ENCODE measurements at regions of chr12 and their contacts with region 1.

Region 1: DNA sequence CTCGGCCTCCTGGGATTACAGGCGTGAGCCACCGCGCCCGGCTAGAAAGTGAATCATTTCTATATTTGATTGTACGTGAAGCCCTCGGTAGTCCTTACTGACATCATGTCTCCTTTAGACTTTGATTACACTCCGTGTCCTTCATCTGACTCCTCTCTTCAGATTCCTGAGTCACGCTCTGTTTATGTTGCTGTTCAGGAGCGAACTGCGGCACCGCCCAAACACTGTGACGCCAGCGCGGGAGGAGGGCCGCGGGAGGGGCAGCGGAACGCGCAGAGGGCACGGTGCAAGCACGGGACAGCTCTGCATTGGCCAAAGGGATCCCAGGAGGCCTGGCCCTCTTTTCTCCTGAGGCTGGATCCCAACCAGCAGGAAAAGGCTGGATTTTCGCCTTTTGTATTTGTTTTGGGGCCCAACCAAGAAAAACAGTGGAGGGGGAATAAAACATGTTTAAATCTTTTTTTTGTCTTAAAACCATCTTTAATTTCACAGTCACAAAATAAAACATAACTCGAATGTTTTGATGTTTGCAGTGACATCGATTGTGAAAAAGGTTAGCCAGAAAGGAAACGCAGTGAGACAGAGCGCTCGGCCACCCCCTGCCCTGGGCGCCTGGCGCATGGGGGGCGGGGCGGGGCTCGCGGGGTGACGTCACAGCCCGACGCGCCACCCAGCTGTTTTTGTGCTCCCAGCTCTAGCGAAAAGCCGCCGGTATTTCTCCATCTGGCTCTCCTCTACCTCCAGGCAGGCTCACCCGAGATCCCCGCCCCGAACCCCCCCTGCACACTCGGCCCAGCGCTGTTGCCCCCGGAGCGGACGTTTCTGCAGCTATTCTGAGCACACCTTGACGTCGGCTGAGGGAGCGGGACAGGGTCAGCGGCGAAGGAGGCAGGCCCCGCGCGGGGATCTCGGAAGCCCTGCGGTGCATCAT is at the start of gene GABARAPL1:
- DNase-seq: peak; percentile 97 to 99 (median 98)
- ATAC-seq: peak; percentile 92 to 96 (median 93)
- H3K4me3 ChIP-seq: peak within 1 kb of the TSS; percentile 65 to 89 (median 80)
- H3K27ac ChIP-seq: peak within 1 kb of the TSS; percentile 95 to 100 (median 98)
- H3K4me1 ChIP-seq: peaks cover 3 to 36% (median 19%) of the 10 kb centered on the region in 12 donors
- H3K27me3 ChIP-seq: no peaks in the 10 kb centered on the region
- CTCF ChIP-seq: peak in 2 of 12 donors; percentile 7 to 12
- POLR2A ChIP-seq: peak; percentile 39 to 72
- total RNA-seq, gene GABARAPL1: 212 to 790 (median 297) TPM

Region 2: GRCh38 chr12:10364815-10365622 is 152.6 kb after region 1 on chr12:
- intact Hi-C with region 1: loop called in 1 of 10 experiments (anchors 5 kb)
- DNase-seq: peak in 4 of 5 donors; percentile 58 to 73 (median 68)
- ATAC-seq: peak; percentile 82 to 91 (median 87)
- H3K4me3 ChIP-seq: peak overlapping the region; percentile 57 to 92 (median 66)
- H3K27ac ChIP-seq: peak overlapping the region; percentile 79 to 97 (median 91)
- H3K4me1 ChIP-seq: peaks cover 0 to 64% (median 14%) of the 10 kb centered on the region in 12 donors
- H3K27me3 ChIP-seq: no peaks in the 10 kb centered on the region
- CTCF ChIP-seq: no peak
- POLR2A ChIP-seq: no peak

Region 3: GRCh38 chr12:10613349-10614055 is 401.0 kb after region 1 on chr12 and contains the start of gene MAGOHB:
- intact Hi-C with region 1: loop called in 1 of 10 experiments (anchors 2 kb)
- DNase-seq: peak; percentile 96 to 97 (median 96)
- ATAC-seq: peak; percentile 99 to 100 (median 100)
- H3K4me3 ChIP-seq: peak within 1 kb of the TSS; percentile 63 to 91 (median 79)
- H3K27ac ChIP-seq: peak within 1 kb of the TSS; percentile 41 to 91 (median 87)
- H3K4me1 ChIP-seq: peaks cover 0 to 21% (median 9%) of the 10 kb centered on the region in 12 donors
- H3K27me3 ChIP-seq: peaks cover 0 to 6% (median 0%) of the 10 kb centered on the region in 9 donors
- CTCF ChIP-seq: peak in 1 of 12 donors; percentile 7
- POLR2A ChIP-seq: peak in 1 of 2 donors; percentile 75
- total RNA-seq, gene MAGOHB: 1.8 to 18.1 (median 12.7) TPM

Region 4: GRCh38 chr12:10716704-10717315 is 504.3 kb after region 1 on chr12:
- intact Hi-C with region 1: loop called in 8 of 10 experiments (anchors 2 to 10 kb)
- DNase-seq: peak; percentile 78 to 87 (median 84)
- ATAC-seq: peak; percentile 75 to 94 (median 92)
- H3K4me3 ChIP-seq: peak overlapping the region in 8 of 12 donors; percentile 12 to 30 (median 21)
- H3K27ac ChIP-seq: peak overlapping the region; percentile 37 to 100 (median 98)
- H3K4me1 ChIP-seq: peaks cover 13 to 66% (median 54%) of the 10 kb centered on the region in 12 donors
- H3K27me3 ChIP-seq: no peaks in the 10 kb centered on the region
- CTCF ChIP-seq: no peak
- POLR2A ChIP-seq: no peak

Measured in heart left ventricle (tissue), 16 donors.